ENCODE measurements at regions of chr6 and their contacts with region 1.

Region 1: GRCh38 chr6:89952686-89953085 is 58.4 kb downstream of the GJA10 start:
- DNase-seq: peak; percentile 85
- ATAC-seq: peak; percentile 84
- H3K4me3 Mint-ChIP-seq: peak overlapping the region; percentile 35
- H3K27ac Mint-ChIP-seq: peak overlapping the region; percentile 89
- H3K4me1 Mint-ChIP-seq: peaks cover 72% of the 10 kb centered on the region
- H3K27me3 Mint-ChIP-seq: no peaks in the 10 kb centered on the region
- CTCF ChIP-seq: no peak

Region 2: DNA sequence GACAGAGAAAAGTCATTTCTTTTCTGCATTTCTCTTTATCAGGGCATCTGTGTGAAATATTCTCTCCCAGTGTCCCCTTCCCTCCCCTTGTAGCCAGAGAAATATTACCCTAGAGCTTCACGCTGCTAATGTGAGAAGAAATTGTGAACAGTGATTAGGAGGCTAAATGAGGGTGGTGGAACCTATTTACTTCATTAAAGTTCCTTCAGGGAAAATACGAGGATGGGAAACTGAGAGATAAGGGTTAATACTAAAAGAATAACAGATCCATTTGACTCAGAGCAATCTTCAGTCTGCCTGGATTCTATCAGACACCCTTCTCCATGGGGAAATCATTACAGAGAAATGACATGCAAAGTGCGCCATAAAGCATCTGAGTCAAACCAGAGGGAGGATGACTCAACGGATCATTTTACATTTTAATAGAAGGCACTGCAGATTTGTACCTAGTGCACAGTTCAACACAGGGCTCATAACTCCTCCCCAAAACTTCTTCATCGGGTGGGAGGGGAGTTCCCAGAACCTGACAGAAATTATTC is 72.9 kb after region 1 on chr6:
- CTCF ChIA-PET with region 1: interaction called, 3 read pairs
- POLR2A ChIA-PET with region 1: interaction called, 5 read pairs
- intact Hi-C with region 1: loop called (anchors 5 kb)
- DNase-seq: peak; percentile 75
- ATAC-seq: peak; percentile 92
- H3K4me3 Mint-ChIP-seq: peak overlapping the region; percentile 28
- H3K27ac Mint-ChIP-seq: peak overlapping the region; percentile 90
- H3K4me1 Mint-ChIP-seq: peaks cover 85% of the 10 kb centered on the region
- H3K27me3 Mint-ChIP-seq: no peaks in the 10 kb centered on the region
- CTCF ChIP-seq: no peak